Heart left ventricle (tissue), 16 donors: ENCODE measurements at regions of chr17 and their contacts with region 1.

Region 1: GRCh38 chr17:65418628-65419027 is 142.8 kb downstream of the AXIN2 start:
- DNase-seq: peak in 2 of 5 donors; percentile 35 to 40
- ATAC-seq: peak; percentile 42 to 82 (median 72)
- H3K4me3 ChIP-seq: no peak overlapping the region
- H3K27ac ChIP-seq: no peak overlapping the region
- H3K4me1 ChIP-seq: no peaks in the 10 kb centered on the region
- H3K27me3 ChIP-seq: no peaks in the 10 kb centered on the region
- CTCF ChIP-seq: peak in 7 of 12 donors; percentile 11 to 34 (median 29)
- POLR2A ChIP-seq: no peak

Region 2: DNA sequence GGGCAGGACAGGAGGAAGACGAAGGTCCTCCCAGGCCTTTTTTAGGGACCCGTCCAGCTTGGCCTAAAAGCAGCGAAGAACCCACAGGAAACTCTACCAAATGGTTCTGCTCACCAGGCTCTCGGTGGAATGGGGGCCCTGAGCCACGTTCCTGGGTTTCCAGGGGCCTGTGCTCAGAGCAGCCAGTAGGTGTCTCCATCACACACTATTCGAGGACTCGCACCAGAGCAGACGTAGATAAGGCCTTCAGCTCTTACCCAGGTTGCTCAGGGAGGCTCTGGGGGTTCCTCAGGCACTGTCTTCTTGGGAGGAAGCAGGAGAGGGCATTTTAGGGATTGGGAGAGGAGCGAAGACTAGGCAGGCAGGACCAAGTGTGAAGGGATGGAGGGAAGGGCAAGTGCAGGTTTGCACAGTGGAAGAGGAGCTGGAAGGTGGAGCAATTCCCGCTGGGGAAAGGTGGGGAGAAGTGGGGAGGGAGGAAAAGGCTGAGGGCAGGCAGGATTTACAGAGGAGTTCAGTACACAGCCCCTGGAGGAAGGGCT is 124.4 kb before region 1 on chr17:
- intact Hi-C with region 1: loop called in 1 of 10 experiments (anchors 10 kb)
- DNase-seq: peak; percentile 30 to 63 (median 56)
- ATAC-seq: peak; percentile 55 to 95 (median 88)
- H3K4me3 ChIP-seq: no peak overlapping the region
- H3K27ac ChIP-seq: no peak overlapping the region
- H3K4me1 ChIP-seq: peaks cover 0 to 6% (median 0%) of the 10 kb centered on the region in 12 donors
- H3K27me3 ChIP-seq: no peaks in the 10 kb centered on the region
- CTCF ChIP-seq: peak; percentile 53 to 81 (median 66)
- POLR2A ChIP-seq: no peak

Region 3: DNA sequence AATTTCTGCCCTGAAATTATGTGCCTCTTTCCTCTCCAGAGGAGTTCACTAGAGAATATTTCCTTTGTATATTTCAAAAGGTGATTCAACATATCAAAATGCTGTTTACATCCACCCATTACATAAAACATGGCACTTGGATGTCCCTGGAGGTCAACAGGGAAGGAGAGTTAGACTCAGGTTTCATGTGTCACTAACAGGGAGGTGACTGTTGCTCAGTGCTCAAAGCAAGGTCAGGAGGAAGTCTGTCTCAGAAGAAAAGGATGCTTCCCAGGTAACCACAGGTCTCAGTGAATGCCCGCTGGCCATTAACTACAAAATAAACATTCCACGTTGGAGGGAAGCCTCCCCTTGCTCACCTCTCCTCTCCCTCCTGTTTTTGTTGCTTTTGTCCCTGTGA is 55.8 kb before region 1 on chr17:
- intact Hi-C with region 1: loop called in 1 of 10 experiments (anchors 10 kb)
- DNase-seq: no peak
- ATAC-seq: no peak
- H3K4me3 ChIP-seq: no peak overlapping the region
- H3K27ac ChIP-seq: no peak overlapping the region
- H3K4me1 ChIP-seq: no peaks in the 10 kb centered on the region
- H3K27me3 ChIP-seq: peaks cover 0 to 7% (median 0%) of the 10 kb centered on the region in 9 donors
- CTCF ChIP-seq: no peak
- POLR2A ChIP-seq: no peak

Region 4: DNA sequence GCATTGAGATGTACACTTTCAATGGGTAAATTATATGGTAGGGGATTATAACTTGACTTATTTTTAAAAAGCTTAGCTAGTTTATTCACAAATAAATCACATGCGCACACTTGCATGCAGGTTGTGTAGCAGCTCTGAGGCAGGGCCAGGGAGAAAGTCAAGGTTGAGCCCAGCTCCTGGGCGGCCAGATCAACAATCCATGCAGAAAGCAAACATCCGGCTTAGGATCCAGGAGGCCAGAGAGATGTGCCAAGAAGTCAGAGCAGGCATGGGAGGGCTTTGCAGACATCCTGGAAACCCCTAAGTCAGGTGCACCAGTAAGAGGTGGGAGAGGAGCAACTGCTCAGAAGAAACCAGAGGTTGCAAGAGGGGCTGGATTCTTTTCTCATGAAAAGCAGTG is 43.7 kb before region 1 on chr17:
- intact Hi-C with region 1: no loop called
- DNase-seq: no peak
- ATAC-seq: no peak
- H3K4me3 ChIP-seq: no peak overlapping the region
- H3K27ac ChIP-seq: no peak overlapping the region
- H3K4me1 ChIP-seq: no peaks in the 10 kb centered on the region
- H3K27me3 ChIP-seq: peaks cover 0 to 19% (median 0%) of the 10 kb centered on the region in 9 donors
- CTCF ChIP-seq: no peak
- POLR2A ChIP-seq: no peak

Region 5: GRCh38 chr17:65472415-65473309 is 54.0 kb after region 1 on chr17:
- intact Hi-C with region 1: no loop called
- DNase-seq: peak in 1 of 5 donors; percentile 38
- ATAC-seq: peak in 3 of 4 donors; percentile 27 to 78 (median 47)
- H3K4me3 ChIP-seq: no peak overlapping the region
- H3K27ac ChIP-seq: peak overlapping the region in 2 of 12 donors; percentile 24 to 45
- H3K4me1 ChIP-seq: peaks cover 0 to 17% (median 7%) of the 10 kb centered on the region in 12 donors
- H3K27me3 ChIP-seq: no peaks in the 10 kb centered on the region
- CTCF ChIP-seq: no peak
- POLR2A ChIP-seq: no peak

Region 6: GRCh38 chr17:65677932-65678331 is 259.3 kb after region 1 on chr17:
- intact Hi-C with region 1: no loop called
- DNase-seq: no peak
- ATAC-seq: no peak
- H3K4me3 ChIP-seq: no peak overlapping the region
- H3K27ac ChIP-seq: no peak overlapping the region
- H3K4me1 ChIP-seq: no peaks in the 10 kb centered on the region
- H3K27me3 ChIP-seq: no peaks in the 10 kb centered on the region
- CTCF ChIP-seq: no peak
- POLR2A ChIP-seq: no peak